CD4-positive, alpha-beta memory T cell (primary cell): ENCODE measurements at regions of chr5 and their contacts with region 1.

Region 1: GRCh38 chr5:141636413-141637122 is at the starts of genes HDAC3 and RELL2:
- DNase-seq: peak; percentile 89 to 95 (median 93)
- H3K4me3 ChIP-seq: peak within 1 kb of the TSS; percentile 86 to 98
- H3K4me3 Mint-ChIP-seq: peak within 1 kb of the TSS; percentile 88 to 96 (median 94)
- H3K27ac ChIP-seq: peak within 1 kb of the TSS; percentile 87
- H3K27ac Mint-ChIP-seq: peak within 1 kb of the TSS; percentile 90 to 98 (median 96)
- H3K4me1 ChIP-seq: peaks cover 50% of the 10 kb centered on the region
- H3K4me1 Mint-ChIP-seq: peaks cover 31 to 51% (median 39%) of the 10 kb centered on the region in 4 donors
- H3K27me3 ChIP-seq: no peaks in the 10 kb centered on the region
- H3K27me3 Mint-ChIP-seq: no peaks in the 10 kb centered on the region
- total RNA-seq, gene HDAC3: 85.1 to 91.0 TPM
- total RNA-seq, gene RELL2: 20.4 to 21.3 TPM

Region 2: DNA sequence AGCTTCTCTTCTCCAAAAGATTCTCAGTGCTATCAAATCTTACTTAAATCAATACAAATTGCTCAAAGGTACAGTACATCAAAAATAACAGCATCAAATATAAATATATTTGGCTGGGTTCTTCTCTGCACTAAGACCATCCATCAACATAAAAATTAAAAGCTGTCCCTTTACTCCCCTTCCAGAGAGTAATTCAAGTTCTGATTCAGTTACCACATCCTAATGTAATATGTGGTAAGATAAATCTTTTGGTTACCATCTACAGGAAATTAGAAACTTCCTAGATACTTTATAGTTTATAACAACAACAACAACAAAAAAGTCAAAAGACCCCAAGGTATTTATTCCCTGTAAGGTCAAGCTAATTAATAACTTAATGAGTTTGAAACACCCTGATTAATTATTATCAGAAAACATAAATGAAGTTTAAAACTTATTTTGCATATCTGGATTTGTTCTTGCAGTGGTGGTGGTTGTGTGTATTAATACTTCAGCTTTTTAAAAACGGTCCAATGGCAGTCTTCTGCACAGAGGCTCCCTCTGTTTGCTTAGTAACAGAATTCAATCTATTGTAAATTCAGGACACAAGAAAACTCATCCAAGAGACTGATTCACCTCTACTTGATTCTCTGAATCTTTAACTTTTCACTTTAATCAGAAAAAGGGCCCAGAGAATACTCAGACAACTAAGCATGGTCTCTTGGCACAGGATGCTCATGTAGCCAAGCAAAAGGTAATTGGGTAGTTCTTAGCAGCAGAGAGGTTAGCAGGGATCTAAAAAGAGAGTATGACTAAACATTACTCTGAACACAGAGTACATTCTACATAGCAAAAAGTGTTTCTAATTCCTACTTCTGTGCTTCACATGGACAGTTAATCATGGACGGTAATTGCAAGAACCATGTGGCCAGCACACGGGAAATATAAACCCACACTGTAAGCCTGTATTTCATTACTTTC is 37.9 kb before region 1 on chr5:
- CTCF ChIA-PET with region 1: interaction called, 712 read pairs
- POLR2A ChIA-PET with region 1: interaction called, 59 read pairs
- intact Hi-C with region 1: no loop called
- DNase-seq: peak in 2 of 5 donors; percentile 23 to 35
- H3K4me3 ChIP-seq: no peak overlapping the region
- H3K4me3 Mint-ChIP-seq: peak overlapping the region; percentile 43 to 80 (median 64)
- H3K27ac ChIP-seq: peak overlapping the region; percentile 34
- H3K27ac Mint-ChIP-seq: peak overlapping the region; percentile 70 to 94 (median 91)
- H3K4me1 ChIP-seq: peaks cover 92% of the 10 kb centered on the region
- H3K4me1 Mint-ChIP-seq: peaks cover 62 to 89% (median 76%) of the 10 kb centered on the region in 4 donors
- H3K27me3 ChIP-seq: no peaks in the 10 kb centered on the region
- H3K27me3 Mint-ChIP-seq: no peaks in the 10 kb centered on the region

Region 3: DNA sequence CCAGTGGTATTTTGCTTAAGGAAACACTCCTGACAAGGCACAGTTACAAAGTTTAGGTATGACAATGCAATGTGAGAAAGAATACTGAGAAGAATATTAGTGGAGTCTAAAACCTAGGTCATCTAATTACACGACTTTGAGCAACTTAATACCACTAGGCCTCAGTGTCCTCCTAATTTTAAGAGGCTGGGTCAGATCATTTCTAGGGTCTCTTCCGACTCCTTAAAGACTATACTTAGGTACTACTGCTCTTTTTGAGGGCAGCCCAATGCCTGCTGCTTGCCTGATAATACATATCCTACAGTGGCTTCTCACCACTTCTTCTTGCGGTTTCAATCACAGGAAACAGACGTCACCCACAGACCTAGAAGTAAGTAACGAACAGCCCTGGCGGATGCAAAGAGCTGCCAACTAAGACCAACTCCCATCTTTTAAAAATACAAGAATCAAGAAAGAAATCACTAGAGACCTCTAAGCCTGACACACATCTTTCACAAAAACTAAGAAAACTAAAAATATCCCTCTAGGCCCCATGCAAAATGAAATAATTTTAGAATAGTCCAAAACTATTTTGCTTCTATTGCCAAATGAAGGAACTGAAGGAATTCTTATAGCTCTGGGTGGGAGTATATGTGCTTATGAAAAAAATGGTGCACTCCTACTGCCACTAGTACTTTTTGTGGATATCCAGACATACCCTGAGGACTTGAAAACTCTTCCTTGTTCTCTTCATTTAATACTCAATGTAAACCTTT is 30.9 kb before region 1 on chr5:
- CTCF ChIA-PET with region 1: interaction called, 16 read pairs
- POLR2A ChIA-PET with region 1: interaction called, 53 read pairs
- intact Hi-C with region 1: loop called (anchors 1 kb)
- DNase-seq: peak; percentile 85 to 93 (median 87)
- H3K4me3 ChIP-seq: peak overlapping the region; percentile 13 to 34
- H3K4me3 Mint-ChIP-seq: peak overlapping the region; percentile 67 to 87 (median 81)
- H3K27ac ChIP-seq: peak overlapping the region; percentile 72
- H3K27ac Mint-ChIP-seq: peak overlapping the region; percentile 89 to 95 (median 93)
- H3K4me1 ChIP-seq: peaks cover 97% of the 10 kb centered on the region
- H3K4me1 Mint-ChIP-seq: peaks cover 62 to 95% (median 79%) of the 10 kb centered on the region in 4 donors
- H3K27me3 ChIP-seq: no peaks in the 10 kb centered on the region
- H3K27me3 Mint-ChIP-seq: no peaks in the 10 kb centered on the region

Region 4: GRCh38 chr5:141618804-141619554 is 17.6 kb before region 1 on chr5 and contains the start of gene DIAPH1:
- CTCF ChIA-PET with region 1: interaction called, 198 read pairs
- POLR2A ChIA-PET with region 1: interaction called, 159 read pairs
- intact Hi-C with region 1: loop called (anchors 1 kb)
- DNase-seq: peak; percentile 96 to 98 (median 97)
- H3K4me3 ChIP-seq: peak within 1 kb of the TSS; percentile 86 to 95
- H3K4me3 Mint-ChIP-seq: peak within 1 kb of the TSS; percentile 94 to 100 (median 98)
- H3K27ac ChIP-seq: peak within 1 kb of the TSS; percentile 86
- H3K27ac Mint-ChIP-seq: peak within 1 kb of the TSS; percentile 93 to 99 (median 98)
- H3K4me1 ChIP-seq: peaks cover 45% of the 10 kb centered on the region
- H3K4me1 Mint-ChIP-seq: peaks cover 33 to 57% (median 44%) of the 10 kb centered on the region in 4 donors
- H3K27me3 ChIP-seq: no peaks in the 10 kb centered on the region
- H3K27me3 Mint-ChIP-seq: no peaks in the 10 kb centered on the region
- total RNA-seq, gene DIAPH1: 211 TPM

Region 5: GRCh38 chr5:141650851-141651727 is 14.5 kb after region 1 on chr5 and contains the start of gene FCHSD1:
- CTCF ChIA-PET with region 1: interaction called, 15 read pairs
- POLR2A ChIA-PET with region 1: interaction called, 55 read pairs
- intact Hi-C with region 1: loop called (anchors 1 kb)
- DNase-seq: peak; percentile 75 to 81 (median 76)
- H3K4me3 ChIP-seq: peak within 1 kb of the TSS; percentile 42 to 74
- H3K4me3 Mint-ChIP-seq: peak within 1 kb of the TSS; percentile 87 to 96 (median 93)
- H3K27ac ChIP-seq: peak within 1 kb of the TSS; percentile 50
- H3K27ac Mint-ChIP-seq: peak within 1 kb of the TSS; percentile 86 to 97 (median 94)
- H3K4me1 ChIP-seq: peaks cover 29% of the 10 kb centered on the region
- H3K4me1 Mint-ChIP-seq: peaks cover 27 to 49% (median 38%) of the 10 kb centered on the region in 4 donors
- H3K27me3 ChIP-seq: no peaks in the 10 kb centered on the region
- H3K27me3 Mint-ChIP-seq: no peaks in the 10 kb centered on the region
- total RNA-seq, gene FCHSD1: 106 to 110 TPM

Region 6: DNA sequence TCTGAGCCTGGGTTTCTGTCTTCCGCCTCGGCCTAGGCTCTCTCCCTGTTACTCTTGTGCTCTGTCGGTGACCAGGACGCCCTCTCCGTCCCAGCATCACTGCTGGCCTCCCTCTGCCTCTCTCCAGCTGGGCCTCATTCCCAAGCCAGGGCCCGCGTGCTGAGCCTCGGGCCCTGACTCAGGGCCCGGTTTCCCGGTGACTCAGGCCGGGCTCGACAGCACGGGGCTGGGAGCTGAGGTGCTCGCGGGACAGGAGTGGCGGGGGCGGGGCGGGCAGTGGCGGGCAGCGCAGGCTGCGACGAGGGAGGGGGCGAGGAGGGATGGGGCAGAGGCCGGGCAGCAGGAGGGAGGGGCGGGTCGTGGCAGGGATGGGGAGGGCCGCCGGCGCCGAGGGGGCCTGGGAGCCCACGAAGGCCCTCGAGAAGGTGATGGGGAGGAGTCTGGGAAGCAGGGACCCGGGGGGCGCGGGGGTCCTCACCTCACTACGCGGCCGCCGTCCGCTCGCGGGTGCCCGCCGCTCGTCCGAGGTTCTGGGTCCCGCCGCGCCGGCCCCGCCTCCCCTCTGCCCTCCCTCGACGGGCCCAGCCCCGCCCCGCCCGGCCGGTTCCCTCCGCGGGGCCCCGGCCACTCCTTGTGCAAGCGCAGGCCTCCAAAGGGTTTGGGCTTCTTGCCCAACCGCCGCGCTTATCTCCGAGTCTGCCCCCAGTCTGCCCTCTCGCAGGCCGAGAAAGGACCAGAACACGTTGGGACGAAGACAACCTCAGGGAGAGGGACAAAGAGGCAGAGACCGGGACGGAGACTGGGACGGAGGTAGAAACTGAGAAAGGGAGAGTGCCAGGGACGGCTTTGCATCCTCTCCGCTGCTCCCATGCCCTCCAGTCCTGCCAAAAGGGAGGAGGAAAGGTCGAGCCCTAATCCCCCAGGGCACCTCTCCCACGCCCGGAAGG is 45.4 kb after region 1 on chr5 and contains the start of gene ARAP3:
- CTCF ChIA-PET with region 1: interaction called, 4 read pairs
- POLR2A ChIA-PET with region 1: interaction called, 13 read pairs
- intact Hi-C with region 1: loop called (anchors 5 kb)
- DNase-seq: peak in 2 of 5 donors; percentile 24 to 47
- H3K4me3 ChIP-seq: peak within 1 kb of the TSS in 1 of 2 donors; percentile 17
- H3K4me3 Mint-ChIP-seq: peak within 1 kb of the TSS; percentile 78 to 86 (median 83)
- H3K27ac ChIP-seq: no peak within 1 kb of the TSS
- H3K27ac Mint-ChIP-seq: peak within 1 kb of the TSS; percentile 47 to 91 (median 77)
- H3K4me1 ChIP-seq: peaks cover 33% of the 10 kb centered on the region
- H3K4me1 Mint-ChIP-seq: peaks cover 14 to 36% (median 26%) of the 10 kb centered on the region in 4 donors
- H3K27me3 ChIP-seq: no peaks in the 10 kb centered on the region
- H3K27me3 Mint-ChIP-seq: peaks cover 0 to 2% of the 10 kb centered on the region in 2 donors
- total RNA-seq, gene ARAP3: 14.7 to 16.4 TPM

Region 7: GRCh38 chr5:141771031-141771430 is 134.5 kb after region 1 on chr5:
- CTCF ChIA-PET with region 1: no interaction called
- POLR2A ChIA-PET with region 1: no interaction called
- intact Hi-C with region 1: no loop called
- DNase-seq: no peak
- H3K4me3 ChIP-seq: no peak overlapping the region
- H3K4me3 Mint-ChIP-seq: no peak overlapping the region
- H3K27ac ChIP-seq: no peak overlapping the region
- H3K27ac Mint-ChIP-seq: no peak overlapping the region
- H3K4me1 ChIP-seq: no peaks in the 10 kb centered on the region
- H3K4me1 Mint-ChIP-seq: no peaks in the 10 kb centered on the region
- H3K27me3 ChIP-seq: no peaks in the 10 kb centered on the region
- H3K27me3 Mint-ChIP-seq: peaks cover 4 to 6% of the 10 kb centered on the region in 2 donors

Region 8: GRCh38 chr5:141849375-141850243 is 213.0 kb after region 1 on chr5:
- CTCF ChIA-PET with region 1: interaction called, 5 read pairs
- POLR2A ChIA-PET with region 1: interaction called, 14 read pairs
- intact Hi-C with region 1: no loop called
- DNase-seq: peak; percentile 54 to 74 (median 56)
- H3K4me3 ChIP-seq: peak overlapping the region; percentile 83 to 88
- H3K4me3 Mint-ChIP-seq: peak overlapping the region; percentile 90 to 93 (median 92)
- H3K27ac ChIP-seq: peak overlapping the region; percentile 66
- H3K27ac Mint-ChIP-seq: peak overlapping the region; percentile 75 to 93 (median 88)
- H3K4me1 ChIP-seq: peaks cover 9% of the 10 kb centered on the region
- H3K4me1 Mint-ChIP-seq: peaks cover 5 to 14% (median 11%) of the 10 kb centered on the region in 4 donors
- H3K27me3 ChIP-seq: no peaks in the 10 kb centered on the region
- H3K27me3 Mint-ChIP-seq: peaks cover 1 to 5% of the 10 kb centered on the region in 2 donors